A549 (cell line): ENCODE measurements at regions of chr2 and their contacts with region 1.

Region 1: GRCh38 chr2:130355578-130356431 is at the start of gene PTPN18:
- DNase-seq: peak; percentile 68 to 85
- ATAC-seq: peak; percentile 90 to 97
- H3K4me3 ChIP-seq: peak within 1 kb of the TSS; percentile 91
- H3K27ac ChIP-seq: peak within 1 kb of the TSS; percentile 90 to 97
- H3K4me1 ChIP-seq: peaks cover 17% of the 10 kb centered on the region; the same call in 2 of the 3 replicates
- CTCF ChIP-seq: peak; percentile 52
- EP300 ChIP-seq: no peak
- POLR2A ChIP-seq: peak; percentile 91
- RAD21 ChIP-seq: peak; percentile 33 to 56; a peak in 4 of 5 replicates
- polyA plus RNA-seq, gene PTPN18: 20.4 and 23.7 TPM in 2 replicates

Region 2: DNA sequence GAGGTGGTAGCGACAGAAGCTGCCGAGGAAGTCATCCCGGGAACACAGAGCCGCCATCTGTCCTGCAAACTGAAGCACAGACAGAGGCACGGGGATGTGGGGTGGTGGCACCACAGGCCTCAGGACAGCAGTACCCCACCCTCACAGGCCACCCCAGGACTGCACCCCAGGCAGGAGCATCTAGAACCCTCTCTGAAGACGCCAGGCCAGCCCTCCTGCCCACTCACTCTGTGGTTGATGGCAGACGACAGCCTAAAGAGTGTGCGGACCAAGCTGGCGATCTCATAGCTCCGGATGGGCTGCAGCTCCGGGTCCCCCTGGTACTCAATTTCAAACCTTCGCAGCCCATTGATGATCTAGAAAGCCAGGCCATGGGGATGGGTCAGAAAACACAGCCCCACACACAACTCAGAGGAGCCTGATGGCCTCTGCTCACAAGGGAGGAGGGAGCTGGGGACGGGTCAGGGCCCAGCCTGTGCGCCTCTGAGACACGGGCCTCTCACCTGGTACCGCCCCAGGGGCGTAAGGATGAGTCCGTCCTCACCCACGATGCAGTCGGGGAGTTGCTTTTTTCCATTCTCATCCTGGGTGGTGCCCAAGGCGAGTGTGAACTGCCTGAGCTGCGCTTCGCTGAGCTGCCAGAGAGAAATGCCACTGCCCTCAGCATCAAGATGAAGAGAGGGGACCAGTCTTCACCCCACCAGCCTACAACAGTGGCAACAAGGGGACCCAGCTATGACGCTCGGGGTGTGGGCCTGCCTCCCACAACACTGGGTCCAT is 202.8 kb before region 1 on chr2:
- CTCF ChIA-PET with region 1: no interaction called
- POLR2A ChIA-PET with region 1: no interaction called
- DNase-seq: no peak
- ATAC-seq: no peak
- H3K4me3 ChIP-seq: no peak overlapping the region
- H3K27ac ChIP-seq: no peak overlapping the region
- H3K4me1 ChIP-seq: no peaks in the 10 kb centered on the region
- CTCF ChIP-seq: no peak
- EP300 ChIP-seq: no peak
- POLR2A ChIP-seq: no peak
- RAD21 ChIP-seq: no peak

Region 3: GRCh38 chr2:130342533-130343275 is 13.1 kb before region 1 on chr2 and contains the start of gene IMP4:
- CTCF ChIA-PET with region 1: interaction called, 6 read pairs
- POLR2A ChIA-PET with region 1: interaction called, 27 read pairs
- DNase-seq: peak; percentile 85 to 99
- ATAC-seq: peak; percentile 87 to 95
- H3K4me3 ChIP-seq: peak within 1 kb of the TSS; percentile 88
- H3K27ac ChIP-seq: peak within 1 kb of the TSS; percentile 90 to 95
- H3K4me1 ChIP-seq: peaks cover 18% of the 10 kb centered on the region
- CTCF ChIP-seq: no peak
- EP300 ChIP-seq: no peak
- POLR2A ChIP-seq: peak; percentile 76
- RAD21 ChIP-seq: no peak
- polyA plus RNA-seq, gene IMP4: 113 and 118 TPM in 2 replicates